ENCODE measurements at regions of chr10 and their contacts with region 1.

Region 1: GRCh38 chr10:6401562-6402348 is 178.3 kb downstream of the PRKCQ start:
- DNase-seq: peak; percentile 90
- H3K4me3 Mint-ChIP-seq: peak overlapping the region; percentile 73
- H3K27ac Mint-ChIP-seq: peak overlapping the region; percentile 63
- H3K4me1 Mint-ChIP-seq: peaks cover 25% of the 10 kb centered on the region
- H3K27me3 Mint-ChIP-seq: peaks cover 30% of the 10 kb centered on the region
- CTCF ChIP-seq: peak; percentile 72

Region 2: DNA sequence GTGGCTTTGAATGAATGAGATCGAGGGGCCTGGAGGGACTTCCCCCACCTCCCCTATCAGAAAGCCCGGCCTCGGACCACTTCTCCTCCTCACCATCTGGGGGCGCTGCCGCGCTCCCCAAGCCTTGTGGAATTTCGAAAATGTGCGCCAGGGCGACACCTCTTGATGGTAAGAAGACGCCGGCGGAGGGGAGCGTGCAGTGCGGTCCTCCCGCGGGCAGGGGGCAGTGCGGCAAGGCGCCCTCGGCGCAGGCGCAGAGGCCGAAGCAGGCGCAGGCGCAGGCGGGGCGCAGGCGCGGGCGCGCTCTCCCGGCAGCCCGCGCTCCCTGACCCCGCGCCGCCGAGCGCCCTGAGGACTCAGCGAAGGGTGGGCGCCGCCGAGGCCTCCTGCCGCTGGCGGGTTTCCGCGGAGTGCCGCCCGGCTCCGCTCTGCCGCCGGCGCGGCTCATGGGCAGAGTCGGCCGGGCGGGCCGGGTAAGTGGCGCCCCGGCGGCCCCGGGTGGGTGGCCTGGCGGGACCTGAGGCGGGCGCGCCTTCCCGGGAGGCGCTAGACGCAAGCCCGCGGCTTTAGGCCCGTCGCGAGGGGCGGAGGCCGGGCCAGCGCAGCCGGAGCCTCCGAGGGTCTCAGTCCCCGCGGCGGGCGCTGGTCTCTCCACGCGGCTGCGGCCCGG is 312.9 kb before region 1 on chr10 and contains the start of gene RBM17:
- CTCF ChIA-PET with region 1: interaction called, 6 read pairs
- POLR2A ChIA-PET with region 1: interaction called, 3 read pairs
- intact Hi-C with region 1: loop called (anchors 1 kb)
- DNase-seq: peak; percentile 94
- H3K4me3 Mint-ChIP-seq: peak within 1 kb of the TSS; percentile 79
- H3K27ac Mint-ChIP-seq: peak within 1 kb of the TSS; percentile 52
- H3K4me1 Mint-ChIP-seq: peaks cover 32% of the 10 kb centered on the region
- H3K27me3 Mint-ChIP-seq: peaks cover 28% of the 10 kb centered on the region
- CTCF ChIP-seq: peak; percentile 100
- total RNA-seq, gene RBM17: 113 and 128 TPM in 2 replicates

Region 3: GRCh38 chr10:6136215-6137201 is 265.2 kb before region 1 on chr10:
- CTCF ChIA-PET with region 1: interaction called, 13 read pairs
- POLR2A ChIA-PET with region 1: no interaction called
- intact Hi-C with region 1: no loop called
- DNase-seq: peak; percentile 38
- H3K4me3 Mint-ChIP-seq: no peak overlapping the region
- H3K27ac Mint-ChIP-seq: no peak overlapping the region
- H3K4me1 Mint-ChIP-seq: peaks cover 15% of the 10 kb centered on the region
- H3K27me3 Mint-ChIP-seq: peaks cover 12% of the 10 kb centered on the region
- CTCF ChIP-seq: no peak

Region 4: GRCh38 chr10:6218692-6219493 is 182.9 kb before region 1 on chr10:
- CTCF ChIA-PET with region 1: interaction called, 7 read pairs
- POLR2A ChIA-PET with region 1: interaction called, 11 read pairs
- intact Hi-C with region 1: loop called (anchors 5 kb)
- DNase-seq: peak; percentile 87
- H3K4me3 Mint-ChIP-seq: peak overlapping the region; percentile 3
- H3K27ac Mint-ChIP-seq: no peak overlapping the region
- H3K4me1 Mint-ChIP-seq: peaks cover 18% of the 10 kb centered on the region
- H3K27me3 Mint-ChIP-seq: no peaks in the 10 kb centered on the region
- CTCF ChIP-seq: no peak

Region 5: DNA sequence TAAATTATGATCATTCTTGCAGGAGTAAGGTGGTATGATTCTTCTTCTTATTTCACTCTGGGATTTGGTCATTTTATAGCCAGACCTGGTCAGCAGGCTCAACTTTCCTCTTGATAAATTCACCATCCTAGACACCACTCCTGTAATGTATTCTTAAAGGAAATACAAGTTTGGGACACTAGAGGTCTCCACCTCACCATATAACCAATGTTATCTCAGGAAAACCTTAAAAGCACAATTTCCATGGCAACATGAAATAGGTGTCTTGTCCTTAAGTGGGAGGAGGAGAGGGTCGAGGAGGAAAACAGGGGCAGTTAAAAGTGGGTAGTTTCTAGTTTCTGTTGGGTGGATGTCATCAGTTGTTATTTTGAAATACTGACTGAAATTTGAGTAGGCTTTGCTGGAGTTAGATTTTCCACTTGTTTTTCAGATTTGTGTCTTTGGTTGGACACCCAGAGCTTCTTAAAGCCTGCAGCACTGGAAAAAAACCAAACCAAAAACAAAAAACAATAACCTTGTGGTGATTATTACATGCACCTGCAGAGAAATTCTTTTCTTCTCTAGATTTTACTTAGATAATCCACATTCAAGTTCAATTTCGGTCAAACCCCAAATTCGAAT is 15.2 kb after region 1 on chr10:
- CTCF ChIA-PET with region 1: interaction called, 12 read pairs
- POLR2A ChIA-PET with region 1: no interaction called
- intact Hi-C with region 1: no loop called
- DNase-seq: peak; percentile 58
- H3K4me3 Mint-ChIP-seq: no peak overlapping the region
- H3K27ac Mint-ChIP-seq: no peak overlapping the region
- H3K4me1 Mint-ChIP-seq: no peaks in the 10 kb centered on the region
- H3K27me3 Mint-ChIP-seq: peaks cover 14% of the 10 kb centered on the region
- CTCF ChIP-seq: peak; percentile 75